Common myeloid progenitor, CD34-positive (primary cell): ENCODE measurements at regions of chr11 and their contacts with region 1.

Region 1: GRCh38 chr11:96342961-96343711 is at the start of gene MAML2:
- DNase-seq: peak; percentile 91 to 96 (median 95)
- H3K4me3 ChIP-seq: peak within 1 kb of the TSS; percentile 26 to 98 (median 87)
- H3K27ac ChIP-seq: peak within 1 kb of the TSS; percentile 53 to 67
- H3K4me1 ChIP-seq: peaks cover 26 to 47% (median 44%) of the 10 kb centered on the region in 4 experiments
- H3K27me3 ChIP-seq: no peaks in the 10 kb centered on the region

Region 2: GRCh38 chr11:96065379-96065778 is 277.8 kb before region 1 on chr11:
- CTCF ChIA-PET with region 1: interaction called, 13 read pairs
- POLR2A ChIA-PET with region 1: no interaction called
- DNase-seq: no peak
- H3K4me3 ChIP-seq: no peak overlapping the region
- H3K27ac ChIP-seq: no peak overlapping the region
- H3K4me1 ChIP-seq: peaks cover 0 to 9% (median 4%) of the 10 kb centered on the region in 4 experiments
- H3K27me3 ChIP-seq: no peaks in the 10 kb centered on the region

Region 3: GRCh38 chr11:96228473-96228891 is 114.7 kb before region 1 on chr11:
- CTCF ChIA-PET with region 1: interaction called, 10 read pairs
- POLR2A ChIA-PET with region 1: no interaction called
- DNase-seq: no peak
- H3K4me3 ChIP-seq: no peak overlapping the region
- H3K27ac ChIP-seq: no peak overlapping the region
- H3K4me1 ChIP-seq: peaks cover 0 to 26% (median 8%) of the 10 kb centered on the region in 4 experiments
- H3K27me3 ChIP-seq: no peaks in the 10 kb centered on the region

Region 4: DNA sequence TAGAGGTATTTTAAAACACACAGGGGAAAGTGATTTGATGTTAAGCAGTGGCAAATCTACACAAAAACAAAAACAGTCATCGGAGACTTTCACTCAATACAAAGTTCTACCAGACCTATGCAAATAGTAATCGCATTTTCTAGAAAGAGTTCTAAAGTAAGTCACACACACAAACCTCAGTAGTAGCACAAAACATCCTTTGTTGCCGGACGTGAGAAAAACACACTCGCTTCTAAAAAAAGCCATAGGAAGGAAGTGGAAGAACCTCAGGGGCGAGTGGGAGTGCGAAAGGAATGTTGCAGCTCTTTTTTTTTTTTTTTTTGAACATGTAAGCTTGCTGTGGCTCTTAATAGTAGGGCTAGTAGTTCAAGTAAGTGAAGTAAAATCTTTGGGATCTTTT is 89.0 kb before region 1 on chr11:
- CTCF ChIA-PET with region 1: interaction called, 37 read pairs
- POLR2A ChIA-PET with region 1: no interaction called
- DNase-seq: peak in 1 of 3 donors; percentile 41
- H3K4me3 ChIP-seq: peak overlapping the region in 6 of 7 experiments; percentile 42 to 75 (median 56)
- H3K27ac ChIP-seq: peak overlapping the region; percentile 47 to 73
- H3K4me1 ChIP-seq: peaks cover 42 to 63% (median 53%) of the 10 kb centered on the region in 4 experiments
- H3K27me3 ChIP-seq: no peaks in the 10 kb centered on the region

Region 5: DNA sequence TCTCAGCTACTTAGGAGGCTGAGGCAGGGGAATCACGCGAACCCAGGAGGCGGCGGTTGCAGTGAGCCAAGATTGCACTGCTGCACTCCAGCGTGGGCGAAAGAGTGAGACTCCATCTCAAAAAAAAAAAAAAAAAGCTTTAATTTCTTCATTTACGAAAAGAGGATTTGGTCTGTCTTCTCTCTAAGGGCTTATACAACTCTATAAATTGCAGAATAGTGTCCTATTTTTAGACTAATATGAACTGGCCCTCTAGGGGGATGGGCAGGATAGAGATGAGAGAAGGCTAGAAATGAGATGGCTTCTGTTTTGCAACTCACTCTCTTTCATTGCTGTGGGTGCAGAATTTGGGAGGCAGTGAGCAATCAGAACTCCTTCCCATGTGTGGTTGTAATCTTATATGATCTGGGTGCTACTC is 11.4 kb before region 1 on chr11:
- CTCF ChIA-PET with region 1: interaction called, 35 read pairs
- POLR2A ChIA-PET with region 1: no interaction called
- DNase-seq: no peak
- H3K4me3 ChIP-seq: no peak overlapping the region
- H3K27ac ChIP-seq: no peak overlapping the region
- H3K4me1 ChIP-seq: peaks cover 0 to 5% (median under 1%) of the 10 kb centered on the region in 4 experiments
- H3K27me3 ChIP-seq: no peaks in the 10 kb centered on the region

Region 6: GRCh38 chr11:96781082-96781481 is 437.9 kb after region 1 on chr11:
- CTCF ChIA-PET with region 1: no interaction called
- POLR2A ChIA-PET with region 1: no interaction called
- DNase-seq: no peak
- H3K4me3 ChIP-seq: no peak overlapping the region
- H3K27ac ChIP-seq: no peak overlapping the region
- H3K4me1 ChIP-seq: no peaks in the 10 kb centered on the region
- H3K27me3 ChIP-seq: no peaks in the 10 kb centered on the region